ENCODE measurements at regions of chrX and their contacts with region 1.

Region 1: DNA sequence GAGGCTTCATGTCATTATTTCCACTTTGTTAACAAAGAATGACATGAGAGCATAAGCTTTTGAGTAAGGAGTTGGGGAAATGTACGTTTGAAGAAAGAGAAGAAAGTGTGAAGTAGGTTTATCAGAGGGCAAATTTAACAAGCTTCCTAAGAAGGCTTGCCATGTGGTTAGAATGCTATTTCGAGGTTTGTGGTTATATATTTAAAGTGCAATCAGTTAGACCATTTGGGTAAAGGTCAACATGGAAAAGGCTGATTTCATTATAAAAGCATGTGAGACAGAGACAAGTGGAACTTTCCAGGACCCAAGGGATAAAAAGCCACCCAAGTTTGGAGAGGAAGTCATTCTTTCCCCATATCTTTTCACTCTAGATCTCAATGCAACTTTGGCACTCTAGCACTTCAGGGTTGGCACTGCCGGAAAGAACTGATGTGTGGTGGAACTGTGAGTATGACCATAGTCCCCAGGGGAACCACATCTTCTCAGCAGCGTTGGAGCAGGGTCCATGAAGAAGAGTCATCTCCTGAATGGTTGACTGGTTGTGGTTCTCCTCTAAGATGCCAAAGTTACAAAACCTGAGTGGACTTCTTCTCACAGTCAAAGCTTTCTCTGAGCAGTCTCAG is 529.9 kb downstream of the MID1IP1 start:
- DNase-seq: peak; percentile 3
- H3K4me3 Mint-ChIP-seq: peak overlapping the region; percentile 42
- H3K27ac Mint-ChIP-seq: peak overlapping the region; percentile 76
- H3K4me1 Mint-ChIP-seq: peaks cover 73% of the 10 kb centered on the region
- H3K27me3 Mint-ChIP-seq: peaks cover 2% of the 10 kb centered on the region

Region 2: GRCh38 chrX:39162322-39162735 is 168.9 kb before region 1 on chrX:
- intact Hi-C with region 1: loop called (anchors 5 kb)
- DNase-seq: no peak
- H3K4me3 Mint-ChIP-seq: peak overlapping the region; percentile 22
- H3K27ac Mint-ChIP-seq: peak overlapping the region; percentile 71
- H3K4me1 Mint-ChIP-seq: peaks cover 45% of the 10 kb centered on the region
- H3K27me3 Mint-ChIP-seq: peaks cover 2% of the 10 kb centered on the region

Region 3: GRCh38 chrX:39293203-39293602 is 38.0 kb before region 1 on chrX:
- intact Hi-C with region 1: loop called (anchors 1 kb)
- DNase-seq: no peak
- H3K4me3 Mint-ChIP-seq: peak overlapping the region; percentile 62
- H3K27ac Mint-ChIP-seq: peak overlapping the region; percentile 82
- H3K4me1 Mint-ChIP-seq: peaks cover 40% of the 10 kb centered on the region
- H3K27me3 Mint-ChIP-seq: no peaks in the 10 kb centered on the region

Region 4: GRCh38 chrX:39491548-39492297 is 160.5 kb after region 1 on chrX:
- intact Hi-C with region 1: loop called (anchors 5 kb)
- DNase-seq: peak; percentile 36
- H3K4me3 Mint-ChIP-seq: peak overlapping the region; percentile 24
- H3K27ac Mint-ChIP-seq: peak overlapping the region; percentile 63
- H3K4me1 Mint-ChIP-seq: peaks cover 41% of the 10 kb centered on the region
- H3K27me3 Mint-ChIP-seq: no peaks in the 10 kb centered on the region

Region 5: DNA sequence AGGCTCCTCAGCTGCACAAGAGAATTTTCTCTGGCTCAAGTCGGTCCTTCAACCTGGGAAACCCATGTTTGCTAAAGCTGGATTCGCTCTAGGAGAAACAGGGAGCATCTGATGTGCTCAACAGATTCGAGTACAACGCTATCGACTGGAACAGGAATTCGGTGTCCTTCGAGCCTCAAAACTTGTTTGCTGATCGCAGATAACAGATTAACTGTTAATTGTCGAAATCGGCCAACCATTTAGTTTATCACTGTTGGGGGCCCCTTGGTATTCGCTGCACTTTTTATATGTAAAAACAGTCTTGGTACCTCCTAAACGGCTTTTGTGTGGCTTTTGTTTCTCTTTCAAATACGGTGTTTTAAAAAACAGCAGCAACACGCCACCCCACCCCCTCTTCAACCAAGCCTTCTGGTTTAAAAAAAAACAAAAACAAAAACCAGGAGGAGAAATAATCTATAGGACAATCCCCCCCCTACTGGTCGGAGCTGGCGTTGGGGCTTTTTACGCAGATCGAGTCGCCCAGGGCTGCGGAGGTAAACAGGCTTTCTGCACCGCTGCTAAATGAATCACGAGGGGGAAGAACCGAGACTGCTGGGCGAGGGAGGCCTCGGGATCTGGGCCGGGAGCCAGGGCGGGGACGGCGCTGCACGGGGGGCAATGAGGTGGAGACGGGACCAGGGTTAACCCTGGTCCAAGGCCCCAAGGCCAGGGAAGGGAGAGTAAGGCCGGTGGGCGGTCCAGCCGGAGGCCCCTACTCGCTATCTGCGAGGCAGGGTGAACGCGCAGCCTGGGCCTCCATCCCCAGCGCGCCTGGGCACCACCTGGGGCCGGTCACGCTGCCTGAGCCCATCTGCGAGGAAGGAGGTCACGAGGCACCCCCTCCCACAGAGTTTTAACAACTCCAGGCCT is 838.3 kb after region 1 on chrX:
- intact Hi-C with region 1: loop called (anchors 1 kb)
- DNase-seq: peak; percentile 73
- H3K4me3 Mint-ChIP-seq: peak overlapping the region; percentile 88
- H3K27ac Mint-ChIP-seq: peak overlapping the region; percentile 96
- H3K4me1 Mint-ChIP-seq: peaks cover 62% of the 10 kb centered on the region
- H3K27me3 Mint-ChIP-seq: no peaks in the 10 kb centered on the region